Activated CD4-positive, alpha-beta memory T cell treated with anti-CD3 and anti-CD28 coated beads, Interleukin-2, amount 10 ng/mL, durations not matched to agents 7 days and 5 days (primary cell): ENCODE measurements at regions of chr5 and their contacts with region 1.

Region 1: DNA sequence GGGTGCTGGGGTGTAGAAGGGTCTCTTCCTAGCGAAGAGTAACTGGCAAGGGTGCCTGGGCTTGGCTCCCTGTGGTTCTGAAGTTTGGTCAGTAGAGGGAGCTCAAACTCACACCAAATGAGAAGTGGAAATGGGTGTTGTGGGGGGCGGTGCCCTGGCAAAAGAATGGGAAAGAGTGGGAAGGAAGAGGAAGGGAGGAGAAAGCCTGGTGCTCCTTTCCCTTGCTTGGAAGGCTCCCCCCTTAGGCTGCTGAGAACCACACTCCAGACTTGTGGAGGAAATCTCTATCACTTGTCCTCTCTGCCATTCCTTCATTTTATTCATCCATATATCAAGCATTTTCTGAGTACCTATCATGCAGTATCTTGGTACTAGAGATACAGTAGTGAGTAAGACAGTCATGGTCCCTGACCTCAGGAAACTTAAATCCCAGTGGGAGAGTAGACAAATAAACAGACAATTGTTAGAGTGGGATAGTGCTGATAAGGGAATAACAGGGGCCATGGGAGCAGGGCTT is 13.0 kb downstream of the SLC4A9 start:
- DNase-seq: peak; percentile 43
- H3K4me3 Mint-ChIP-seq: no peak overlapping the region
- H3K27ac Mint-ChIP-seq: no peak overlapping the region
- H3K4me1 Mint-ChIP-seq: peaks cover 3% of the 10 kb centered on the region
- H3K27me3 Mint-ChIP-seq: no peaks in the 10 kb centered on the region

Region 2: DNA sequence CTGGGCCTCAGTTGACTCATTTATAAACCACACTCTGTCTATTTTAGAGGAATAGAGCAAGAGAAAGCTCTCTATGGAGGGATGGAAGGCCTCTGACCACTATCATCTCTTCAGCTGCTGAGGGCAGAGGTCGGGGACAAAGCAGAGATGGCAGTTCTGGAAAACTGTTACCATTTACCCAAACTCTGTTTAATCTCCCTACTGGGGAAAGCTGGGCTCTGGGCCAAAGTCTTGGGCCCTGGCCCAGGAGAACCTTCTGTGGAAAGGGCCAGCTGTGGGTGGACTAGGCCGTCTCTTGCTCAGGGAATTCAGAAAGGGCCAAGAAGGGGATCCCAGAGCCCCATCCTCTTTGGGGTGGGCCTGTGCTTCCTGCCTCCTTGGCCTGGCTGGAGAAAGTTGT is 477.4 kb before region 1 on chr5:
- CTCF ChIA-PET with region 1: no interaction called
- POLR2A ChIA-PET with region 1: no interaction called
- DNase-seq: no peak
- H3K4me3 Mint-ChIP-seq: no peak overlapping the region
- H3K27ac Mint-ChIP-seq: no peak overlapping the region
- H3K4me1 Mint-ChIP-seq: no peaks in the 10 kb centered on the region
- H3K27me3 Mint-ChIP-seq: peaks cover 17% of the 10 kb centered on the region

Region 3: DNA sequence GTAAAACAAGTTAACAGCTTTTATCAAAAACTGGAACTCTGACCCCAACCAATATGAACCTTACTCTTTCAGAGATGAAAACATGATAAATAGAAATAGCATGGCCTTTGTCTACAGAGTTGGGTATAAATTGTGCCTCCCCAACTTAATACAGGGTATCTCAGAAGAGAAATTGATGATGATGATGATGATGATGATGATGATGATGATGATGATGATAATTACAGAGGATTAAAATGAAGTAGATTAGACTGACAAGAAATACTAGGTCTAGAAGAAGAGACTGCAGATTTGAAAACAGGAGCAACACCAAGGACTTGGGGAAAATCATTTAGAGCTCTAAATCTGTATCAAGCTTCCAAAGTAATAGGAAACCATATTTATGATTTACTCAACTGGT is 97.2 kb before region 1 on chr5:
- CTCF ChIA-PET with region 1: no interaction called
- POLR2A ChIA-PET with region 1: no interaction called
- DNase-seq: no peak
- H3K4me3 Mint-ChIP-seq: no peak overlapping the region
- H3K27ac Mint-ChIP-seq: no peak overlapping the region
- H3K4me1 Mint-ChIP-seq: peaks cover 27% of the 10 kb centered on the region
- H3K27me3 Mint-ChIP-seq: no peaks in the 10 kb centered on the region

Region 4: DNA sequence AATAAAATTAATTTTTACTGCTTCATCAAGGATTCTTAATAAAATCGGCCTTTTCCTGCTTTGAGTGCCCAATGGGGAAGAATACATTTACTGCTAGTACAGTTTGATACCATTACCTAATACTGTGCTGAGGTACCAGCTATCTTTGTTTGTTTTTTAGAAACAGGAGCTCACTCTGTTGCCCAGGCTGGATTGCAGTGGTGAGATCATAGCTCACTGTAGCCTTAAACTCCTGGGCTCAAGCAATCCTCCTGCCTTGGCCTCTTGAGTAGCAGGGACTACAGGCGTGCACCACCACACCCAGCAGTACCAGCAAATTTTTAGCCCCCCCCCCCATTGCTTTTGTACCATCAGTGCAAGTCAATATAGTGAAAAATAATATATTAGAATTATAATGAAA is 15.0 kb after region 1 on chr5:
- CTCF ChIA-PET with region 1: interaction called, 25 read pairs
- POLR2A ChIA-PET with region 1: no interaction called
- DNase-seq: no peak
- H3K4me3 Mint-ChIP-seq: no peak overlapping the region
- H3K27ac Mint-ChIP-seq: no peak overlapping the region
- H3K4me1 Mint-ChIP-seq: peaks cover 6% of the 10 kb centered on the region
- H3K27me3 Mint-ChIP-seq: no peaks in the 10 kb centered on the region

Region 5: DNA sequence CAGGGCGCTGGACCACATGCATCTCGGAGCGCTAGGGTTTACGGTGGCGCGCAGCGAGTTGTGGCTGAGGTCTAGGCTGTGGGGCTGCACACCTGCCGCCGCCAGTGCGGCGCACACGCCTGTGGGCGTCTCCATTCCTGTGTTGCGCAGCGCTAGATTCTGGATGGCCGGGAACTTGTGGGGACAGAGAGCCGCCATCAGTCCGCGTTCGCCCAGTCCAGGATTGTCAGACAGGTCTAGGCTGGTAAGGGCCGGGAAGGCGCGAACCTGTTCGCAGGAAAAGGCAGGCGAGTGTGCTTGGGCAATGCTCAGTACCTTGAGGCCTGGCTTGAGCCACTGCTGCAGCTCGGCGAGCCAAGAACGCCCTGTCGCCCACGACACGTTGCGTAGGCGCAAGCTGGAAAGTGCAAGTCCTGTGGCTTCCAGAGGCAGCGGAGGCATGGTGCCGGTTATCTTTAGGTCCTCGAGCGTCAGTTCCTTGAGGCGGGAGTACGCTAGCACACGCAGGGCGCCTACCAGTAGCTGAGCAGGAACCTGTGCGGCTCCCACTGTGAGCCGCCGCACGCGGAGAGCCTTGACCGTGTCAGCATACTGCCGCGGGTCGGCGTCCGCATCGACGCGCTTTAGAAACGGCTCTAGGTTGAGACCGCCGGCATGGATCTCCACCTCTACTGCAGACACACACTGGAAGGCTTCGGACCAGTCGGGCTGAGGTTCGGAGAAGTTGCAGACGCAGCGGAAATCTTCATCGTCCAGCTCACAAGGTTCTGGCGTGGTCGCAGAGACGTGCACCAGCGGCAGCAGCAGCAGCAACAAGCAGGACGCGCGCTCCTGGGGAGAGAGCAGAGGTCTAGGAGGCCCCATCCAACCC is 259.4 kb after region 1 on chr5:
- CTCF ChIA-PET with region 1: interaction called, 24 read pairs
- POLR2A ChIA-PET with region 1: no interaction called
- DNase-seq: peak; percentile 52
- H3K4me3 Mint-ChIP-seq: peak overlapping the region; percentile 77
- H3K27ac Mint-ChIP-seq: no peak overlapping the region
- H3K4me1 Mint-ChIP-seq: peaks cover 36% of the 10 kb centered on the region
- H3K27me3 Mint-ChIP-seq: peaks cover 29% of the 10 kb centered on the region

Region 6: DNA sequence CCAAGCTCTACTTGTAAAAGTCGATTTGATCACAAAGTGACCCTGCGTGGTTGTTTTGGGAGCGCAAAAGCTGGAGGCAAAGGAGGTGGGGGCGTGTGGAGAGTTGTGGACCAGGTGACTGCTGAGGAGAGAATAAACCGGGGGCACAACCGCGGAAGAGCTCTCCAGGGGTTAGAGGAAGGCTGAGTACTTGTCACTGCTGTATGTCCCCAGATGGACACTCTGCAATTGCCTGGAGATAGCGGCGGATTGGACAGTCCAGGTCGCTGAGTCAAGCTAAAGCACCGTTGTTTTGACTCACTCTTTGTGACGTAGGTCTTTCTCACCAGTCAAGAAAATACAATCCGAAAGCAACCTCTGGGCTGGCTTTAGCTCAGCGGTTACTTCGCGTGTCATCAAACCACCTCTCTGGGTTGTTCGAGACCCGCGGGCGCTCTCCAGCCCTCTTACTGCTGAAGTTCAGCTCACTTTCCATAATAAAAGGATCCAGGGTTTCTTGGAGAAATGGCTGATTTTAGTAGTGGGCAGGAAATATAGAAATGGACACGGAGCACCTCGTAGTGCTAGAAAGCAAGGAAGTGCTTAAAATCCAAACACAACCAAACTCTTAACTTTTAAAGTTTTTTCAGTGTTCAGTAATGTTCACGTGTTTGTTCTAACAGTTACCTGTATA is 352.9 kb after region 1 on chr5:
- CTCF ChIA-PET with region 1: interaction called, 32 read pairs
- POLR2A ChIA-PET with region 1: no interaction called
- DNase-seq: peak; percentile 82
- H3K4me3 Mint-ChIP-seq: peak overlapping the region; percentile 70
- H3K27ac Mint-ChIP-seq: peak overlapping the region; percentile 71
- H3K4me1 Mint-ChIP-seq: peaks cover 18% of the 10 kb centered on the region
- H3K27me3 Mint-ChIP-seq: peaks cover 11% of the 10 kb centered on the region